ENCODE measurements at regions of chrX and their contacts with region 1.

Region 1: GRCh38 chrX:155026726-155027508 is at the start of gene FUNDC2:
- DNase-seq: peak; percentile 90 to 96 (median 95)
- H3K4me3 ChIP-seq: peak within 1 kb of the TSS; percentile 73 to 82
- H3K4me3 Mint-ChIP-seq: peak within 1 kb of the TSS; percentile 86 to 93 (median 90)
- H3K27ac ChIP-seq: peak within 1 kb of the TSS; percentile 94
- H3K27ac Mint-ChIP-seq: peak within 1 kb of the TSS; percentile 95 to 97 (median 96)
- H3K4me1 ChIP-seq: peaks cover 15% of the 10 kb centered on the region
- H3K4me1 Mint-ChIP-seq: peaks cover 8 to 36% (median 20%) of the 10 kb centered on the region in 4 donors
- H3K27me3 ChIP-seq: no peaks in the 10 kb centered on the region
- H3K27me3 Mint-ChIP-seq: no peaks in the 10 kb centered on the region
- total RNA-seq, gene FUNDC2: 52.6 to 53.6 TPM

Region 2: GRCh38 chrX:155001873-155002272 is 25.0 kb before region 1 on chrX:
- CTCF ChIA-PET with region 1: no interaction called
- POLR2A ChIA-PET with region 1: no interaction called
- intact Hi-C with region 1: no loop called
- DNase-seq: no peak
- H3K4me3 ChIP-seq: no peak overlapping the region
- H3K4me3 Mint-ChIP-seq: no peak overlapping the region
- H3K27ac ChIP-seq: no peak overlapping the region
- H3K27ac Mint-ChIP-seq: no peak overlapping the region
- H3K4me1 ChIP-seq: no peaks in the 10 kb centered on the region
- H3K4me1 Mint-ChIP-seq: no peaks in the 10 kb centered on the region
- H3K27me3 ChIP-seq: no peaks in the 10 kb centered on the region
- H3K27me3 Mint-ChIP-seq: peaks cover 0 to 7% of the 10 kb centered on the region in 2 donors

Region 3: GRCh38 chrX:155056877-155057792 is 30.2 kb after region 1 on chrX:
- CTCF ChIA-PET with region 1: interaction called, 5 read pairs
- POLR2A ChIA-PET with region 1: interaction called, 9 read pairs
- intact Hi-C with region 1: loop called (anchors 2 kb)
- DNase-seq: peak; percentile 44 to 52 (median 47)
- H3K4me3 ChIP-seq: peak overlapping the region in 1 of 2 donors; percentile 19
- H3K4me3 Mint-ChIP-seq: peak overlapping the region; percentile 71 to 85 (median 78)
- H3K27ac ChIP-seq: peak overlapping the region; percentile 2
- H3K27ac Mint-ChIP-seq: peak overlapping the region; percentile 65 to 86 (median 81)
- H3K4me1 ChIP-seq: peaks cover 13% of the 10 kb centered on the region
- H3K4me1 Mint-ChIP-seq: peaks cover 7 to 26% (median 15%) of the 10 kb centered on the region in 4 donors
- H3K27me3 ChIP-seq: no peaks in the 10 kb centered on the region
- H3K27me3 Mint-ChIP-seq: no peaks in the 10 kb centered on the region

Region 4: DNA sequence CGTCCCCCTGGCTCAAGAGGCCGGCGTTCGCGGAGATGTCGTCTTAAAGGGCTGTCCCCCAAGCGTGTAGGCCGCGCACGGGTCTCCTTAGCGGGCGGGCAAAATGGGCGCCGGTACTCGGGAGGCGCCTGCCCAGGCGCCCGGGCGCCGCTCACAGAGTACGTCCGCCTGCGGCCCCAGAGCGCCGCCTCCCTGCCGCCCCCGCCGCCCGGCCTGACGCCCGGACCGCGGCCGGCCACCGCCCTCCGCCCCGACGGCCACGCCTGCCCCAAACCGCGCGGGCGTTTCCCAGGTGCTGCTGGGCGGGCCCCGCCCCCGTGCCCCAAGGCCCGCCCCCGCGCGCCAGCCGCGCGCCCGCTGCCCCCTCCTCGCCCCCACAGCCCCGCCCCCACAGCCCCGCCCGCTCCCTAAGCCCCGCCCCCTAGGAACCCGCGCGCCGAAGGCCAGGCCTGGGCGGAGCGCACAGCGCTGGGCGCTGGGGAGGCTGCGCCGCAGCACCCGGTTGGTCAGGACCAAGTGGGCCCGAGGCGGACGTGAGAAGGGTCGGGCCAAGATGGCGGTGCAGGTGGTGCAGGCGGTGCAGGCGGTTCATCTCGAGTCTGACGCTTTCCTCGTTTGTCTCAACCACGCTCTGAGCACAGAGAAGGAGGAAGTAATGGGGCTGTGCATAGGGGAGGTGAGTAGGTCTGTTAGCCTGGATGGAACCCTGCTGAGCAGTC is 44.2 kb after region 1 on chrX and contains the starts of genes BRCC3, CMC4 and MTCP1:
- CTCF ChIA-PET with region 1: no interaction called
- POLR2A ChIA-PET with region 1: interaction called, 10 read pairs
- intact Hi-C with region 1: loop called (anchors 1 kb)
- DNase-seq: peak; percentile 70 to 79 (median 77)
- H3K4me3 ChIP-seq: peak within 1 kb of the TSS; percentile 47 to 72
- H3K4me3 Mint-ChIP-seq: peak within 1 kb of the TSS; percentile 87 to 96 (median 90)
- H3K27ac ChIP-seq: peak within 1 kb of the TSS; percentile 82
- H3K27ac Mint-ChIP-seq: peak within 1 kb of the TSS; percentile 93 to 96 (median 95)
- H3K4me1 ChIP-seq: peaks cover 43% of the 10 kb centered on the region
- H3K4me1 Mint-ChIP-seq: peaks cover 35 to 70% (median 40%) of the 10 kb centered on the region in 4 donors
- H3K27me3 ChIP-seq: no peaks in the 10 kb centered on the region
- H3K27me3 Mint-ChIP-seq: no peaks in the 10 kb centered on the region
- total RNA-seq, gene BRCC3: 19.2 to 19.7 TPM
- total RNA-seq, gene CMC4: 6.1 to 7.0 TPM
- total RNA-seq, gene MTCP1: 21.8 to 24.2 TPM

Region 5: DNA sequence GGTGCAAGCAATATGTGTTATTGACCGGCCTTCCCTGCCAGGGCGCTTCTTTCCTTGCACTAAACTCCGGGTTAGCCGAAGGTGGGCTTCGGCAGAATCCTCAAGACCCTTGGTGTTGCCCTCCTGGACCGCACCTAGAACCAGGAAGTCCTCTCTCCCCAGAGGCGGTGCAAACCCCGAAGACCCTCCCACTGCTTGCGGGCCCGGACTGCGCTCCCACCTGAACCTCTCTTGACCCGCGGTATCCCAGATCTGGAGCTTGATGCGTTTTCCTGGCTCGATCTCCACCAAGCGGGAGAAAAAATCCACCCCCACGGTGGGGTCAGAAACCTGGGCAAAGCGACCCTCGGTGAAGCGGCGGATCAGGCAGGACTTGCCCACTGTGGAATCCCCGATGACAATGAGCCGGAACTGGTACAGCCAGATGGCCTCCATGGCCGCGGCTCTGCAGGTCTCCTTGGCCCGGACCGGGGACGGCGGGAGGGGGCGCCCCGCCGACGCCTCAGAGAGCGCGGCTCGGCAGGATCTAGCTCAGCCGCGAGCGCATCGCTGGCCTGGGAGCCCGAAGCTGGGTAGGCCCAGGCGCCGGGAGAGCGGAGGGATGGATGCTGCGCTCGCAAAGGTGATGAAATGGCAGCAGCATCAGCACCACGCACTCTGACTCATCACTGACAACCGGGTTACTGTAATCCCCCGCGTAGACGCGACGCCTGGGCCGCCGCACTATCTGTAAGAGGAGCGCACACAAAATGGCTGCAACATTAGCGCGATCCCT is 237.1 kb after region 1 on chrX and contains the start of gene RAB39B:
- CTCF ChIA-PET with region 1: no interaction called
- POLR2A ChIA-PET with region 1: no interaction called
- intact Hi-C with region 1: loop called (anchors 2 kb)
- DNase-seq: peak; percentile 65 to 83 (median 72)
- H3K4me3 ChIP-seq: peak within 1 kb of the TSS; percentile 42 to 78
- H3K4me3 Mint-ChIP-seq: peak within 1 kb of the TSS; percentile 66 to 91 (median 83)
- H3K27ac ChIP-seq: peak within 1 kb of the TSS; percentile 87
- H3K27ac Mint-ChIP-seq: peak within 1 kb of the TSS; percentile 62 to 97 (median 82)
- H3K4me1 ChIP-seq: peaks cover 31% of the 10 kb centered on the region
- H3K4me1 Mint-ChIP-seq: peaks cover 10 to 40% (median 16%) of the 10 kb centered on the region in 4 donors
- H3K27me3 ChIP-seq: no peaks in the 10 kb centered on the region
- H3K27me3 Mint-ChIP-seq: no peaks in the 10 kb centered on the region
- total RNA-seq, gene RAB39B: 16.5 to 16.6 TPM

Region 6: DNA sequence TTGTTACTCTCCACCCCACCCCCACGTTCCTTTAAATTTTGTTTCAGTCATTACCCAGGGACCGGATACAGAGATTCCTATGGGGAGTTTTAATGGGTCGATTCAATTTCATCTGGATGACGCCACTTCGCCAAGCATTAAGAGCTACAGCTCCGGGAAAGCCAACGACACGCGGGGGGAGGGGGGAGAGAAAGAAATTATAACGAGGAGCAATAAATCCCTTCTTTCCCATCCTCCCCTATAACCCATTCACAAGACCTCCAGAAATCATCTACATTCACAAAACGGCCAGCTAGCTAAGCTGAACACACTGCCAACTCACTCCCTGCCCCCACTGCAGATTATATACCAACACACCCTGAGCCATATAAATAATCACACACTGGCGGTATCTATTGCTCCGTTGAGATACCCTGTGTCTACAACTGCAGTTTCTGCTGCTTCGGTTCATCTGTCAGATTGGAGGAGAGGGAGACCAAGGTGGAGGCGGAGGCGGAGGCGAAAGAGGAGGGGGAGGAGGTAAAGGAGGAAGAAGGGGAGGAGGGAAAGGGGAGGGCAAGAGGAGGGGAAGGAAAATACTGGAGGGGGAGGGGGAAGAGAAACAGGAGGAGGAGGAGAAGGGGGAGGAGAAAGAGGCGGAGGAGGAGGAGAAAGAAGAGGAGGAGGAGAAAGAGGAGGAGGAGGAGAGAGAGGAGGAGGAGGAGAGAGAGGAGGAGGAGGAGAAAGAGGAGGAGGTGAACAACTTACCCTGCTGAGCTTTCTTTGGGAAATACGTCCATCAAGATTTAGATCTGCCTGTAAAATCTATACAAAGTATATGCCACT is 740.3 kb after region 1 on chrX:
- CTCF ChIA-PET with region 1: no interaction called
- POLR2A ChIA-PET with region 1: no interaction called
- intact Hi-C with region 1: loop called (anchors 2 kb)
- DNase-seq: peak; percentile 14 to 49 (median 17)
- H3K4me3 ChIP-seq: no peak overlapping the region
- H3K4me3 Mint-ChIP-seq: peak overlapping the region; percentile 81 to 91 (median 88)
- H3K27ac ChIP-seq: no peak overlapping the region
- H3K27ac Mint-ChIP-seq: peak overlapping the region; percentile 12 to 83 (median 72)
- H3K4me1 ChIP-seq: peaks cover 8% of the 10 kb centered on the region
- H3K4me1 Mint-ChIP-seq: peaks cover 0 to 8% (median 5%) of the 10 kb centered on the region in 4 donors
- H3K27me3 ChIP-seq: no peaks in the 10 kb centered on the region
- H3K27me3 Mint-ChIP-seq: no peaks in the 10 kb centered on the region

Measured in CD4-positive, alpha-beta memory T cell (primary cell).